Activated CD8-positive, alpha-beta T cell treated with anti-CD3 and anti-CD28 coated beads for 36 hours (primary cell): ENCODE measurements at regions of chr6 and their contacts with region 1.

Region 1: DNA sequence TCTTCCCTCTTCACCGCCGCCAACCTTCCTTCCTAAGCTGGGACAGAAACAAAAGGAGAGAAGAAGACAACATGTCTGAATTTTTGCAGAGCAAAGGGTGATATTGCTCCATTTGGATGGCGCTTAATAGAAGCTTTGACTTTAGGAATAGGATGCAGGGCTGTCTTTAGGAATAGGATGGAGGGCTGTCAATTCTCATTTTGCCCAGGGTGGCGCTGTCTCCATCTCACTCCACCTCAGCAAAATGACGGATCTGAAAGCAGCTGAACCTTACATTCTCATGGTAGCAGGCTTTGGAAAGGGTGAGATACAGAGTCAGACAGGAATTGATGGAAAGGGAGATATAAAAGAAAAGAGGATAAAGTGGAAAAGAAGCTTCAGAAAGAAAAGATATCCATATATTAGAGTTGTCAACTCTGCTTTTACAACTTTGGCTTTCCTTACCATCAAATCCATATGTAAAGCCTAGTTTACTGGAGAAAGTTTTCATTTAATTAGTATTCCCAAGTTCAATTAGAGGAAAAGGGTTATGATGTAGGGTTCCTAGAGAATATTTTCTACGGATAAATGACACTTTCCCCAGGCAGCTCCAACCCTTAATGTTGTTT is 2.4 kb downstream of the MTCL3 start:
- DNase-seq: peak; percentile 74
- ATAC-seq: peak; percentile 45
- H3K4me3 Mint-ChIP-seq: peak overlapping the region; percentile 86
- H3K27ac Mint-ChIP-seq: peak overlapping the region; percentile 1
- H3K4me1 Mint-ChIP-seq: peaks cover 26% of the 10 kb centered on the region
- H3K27me3 Mint-ChIP-seq: peaks cover 36% of the 10 kb centered on the region
- CTCF ChIP-seq: peak; percentile 85

Region 2: DNA sequence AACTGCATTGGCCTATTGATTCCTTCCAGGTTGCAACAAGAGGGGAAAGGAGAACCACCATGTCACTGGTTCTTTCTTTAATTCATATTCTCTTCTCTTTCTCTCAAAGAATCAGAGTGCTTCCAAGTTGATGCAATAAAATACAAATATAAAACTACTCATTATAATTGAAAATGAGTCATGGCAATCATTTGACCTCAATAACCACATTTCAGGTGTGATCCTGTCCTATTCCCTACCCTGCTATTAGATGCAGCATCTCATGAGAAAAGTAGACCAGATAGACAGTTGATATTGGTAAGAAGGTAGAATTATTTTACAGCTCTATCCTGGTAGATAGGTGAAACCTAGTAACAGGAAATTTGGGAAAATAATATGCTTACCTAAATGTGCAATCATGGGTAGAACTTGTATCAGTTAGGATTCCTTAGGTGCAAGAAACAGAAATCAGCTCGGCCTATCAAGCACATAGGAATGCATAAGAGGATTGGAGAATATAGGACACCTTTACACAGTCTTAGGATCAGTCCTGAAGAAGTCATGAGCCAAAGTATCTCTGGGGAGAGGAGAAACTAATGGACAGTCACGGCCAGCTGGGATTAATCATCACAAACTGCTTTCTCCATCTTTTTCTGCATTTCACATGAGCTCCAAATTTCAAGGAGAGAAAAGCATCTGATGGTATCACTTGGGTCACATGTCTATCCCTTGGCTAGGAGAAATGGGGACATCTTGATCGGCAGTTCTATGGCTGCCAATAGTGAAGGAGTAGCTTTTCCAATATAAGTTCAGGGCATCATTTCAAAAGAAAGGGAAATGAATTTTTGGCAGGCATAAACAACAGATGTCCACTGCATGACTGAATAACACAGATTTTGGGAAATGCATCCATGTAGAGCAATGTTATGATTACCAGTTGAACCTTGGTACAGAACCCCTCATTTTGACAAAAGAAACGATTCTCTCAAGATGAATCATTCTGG is 269.4 kb before region 1 on chr6:
- CTCF ChIA-PET with region 1: no interaction called
- POLR2A ChIA-PET with region 1: no interaction called
- intact Hi-C with region 1: no loop called
- DNase-seq: no peak
- ATAC-seq: no peak
- H3K4me3 Mint-ChIP-seq: no peak overlapping the region
- H3K27ac Mint-ChIP-seq: no peak overlapping the region
- H3K4me1 Mint-ChIP-seq: no peaks in the 10 kb centered on the region
- H3K27me3 Mint-ChIP-seq: peaks cover 4% of the 10 kb centered on the region
- CTCF ChIP-seq: no peak

Region 3: DNA sequence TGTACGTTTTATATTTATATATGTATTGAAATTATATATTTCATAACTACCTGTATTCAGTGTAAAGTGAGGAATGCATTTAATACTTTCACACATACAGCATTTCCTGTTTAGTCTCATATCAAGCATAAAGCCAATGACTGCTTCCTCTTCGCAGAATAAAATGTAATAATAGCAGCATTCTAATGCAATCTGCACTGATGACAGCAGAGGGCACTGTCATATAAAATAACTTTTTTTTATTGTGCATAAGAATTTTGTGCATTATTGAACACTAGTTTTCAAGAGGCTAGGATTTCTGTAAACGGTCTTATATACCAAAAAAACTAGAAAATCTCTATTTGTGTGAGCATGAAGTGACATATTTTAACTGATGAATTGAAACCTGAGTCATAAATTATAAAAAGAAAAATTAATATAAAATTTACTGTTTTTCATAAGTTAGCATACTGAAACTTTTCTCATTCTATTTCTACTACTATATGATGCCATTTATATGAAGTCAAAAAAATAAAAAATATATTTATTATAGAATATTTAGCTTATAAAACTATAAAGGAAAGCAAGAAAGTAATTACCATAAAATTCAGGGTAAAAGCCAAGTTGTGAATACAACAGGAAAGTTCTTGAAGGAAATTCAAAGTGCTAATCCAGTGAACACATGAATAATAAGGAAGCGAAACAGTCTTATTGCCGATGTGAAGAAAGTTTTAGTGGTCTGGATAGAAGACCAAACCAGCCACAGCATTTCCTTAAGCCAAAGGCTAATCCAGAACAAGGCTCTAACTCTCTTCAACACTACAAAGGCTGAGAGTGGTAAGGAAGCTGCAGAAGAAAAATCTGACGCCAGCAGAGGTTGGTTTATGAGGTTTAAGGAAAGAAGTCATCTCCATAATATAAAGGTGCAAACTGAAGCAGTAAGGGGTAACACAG is 213.8 kb before region 1 on chr6:
- CTCF ChIA-PET with region 1: interaction called, 22 read pairs
- POLR2A ChIA-PET with region 1: no interaction called
- intact Hi-C with region 1: no loop called
- DNase-seq: peak; percentile 69
- ATAC-seq: peak; percentile 86
- H3K4me3 Mint-ChIP-seq: no peak overlapping the region
- H3K27ac Mint-ChIP-seq: no peak overlapping the region
- H3K4me1 Mint-ChIP-seq: peaks cover 29% of the 10 kb centered on the region
- H3K27me3 Mint-ChIP-seq: no peaks in the 10 kb centered on the region
- CTCF ChIP-seq: peak; percentile 81

Region 4: DNA sequence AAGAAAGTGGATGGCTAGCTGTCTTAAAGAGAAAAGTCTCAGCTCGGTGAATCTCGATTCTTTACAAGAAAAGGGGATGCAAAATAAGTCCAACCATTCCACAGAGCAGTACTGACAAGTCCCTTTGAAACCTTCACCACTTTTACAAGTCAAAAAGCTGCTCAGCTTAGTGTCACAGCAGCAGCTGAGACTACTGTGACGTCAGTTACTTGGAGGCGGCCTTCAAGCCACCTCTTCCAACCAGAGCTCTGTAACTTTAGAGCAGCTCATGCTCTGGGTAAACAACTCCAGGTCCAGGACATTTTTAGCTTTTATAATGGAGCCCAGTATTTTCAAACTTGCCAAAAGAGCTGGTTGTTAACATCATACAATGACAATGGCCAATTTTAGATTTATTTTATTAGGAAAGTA is 57.5 kb before region 1 on chr6 and contains the start of gene KIAA0408:
- CTCF ChIA-PET with region 1: interaction called, 16 read pairs
- POLR2A ChIA-PET with region 1: no interaction called
- intact Hi-C with region 1: no loop called
- DNase-seq: no peak
- ATAC-seq: no peak
- H3K4me3 Mint-ChIP-seq: no peak within 1 kb of the TSS
- H3K27ac Mint-ChIP-seq: no peak within 1 kb of the TSS
- H3K4me1 Mint-ChIP-seq: no peaks in the 10 kb centered on the region
- H3K27me3 Mint-ChIP-seq: peaks cover 2% of the 10 kb centered on the region
- CTCF ChIP-seq: no peak
- total RNA-seq, gene KIAA0408: 1.8 to 2.6 TPM

Region 5: GRCh38 chr6:127484212-127484858 is 32.4 kb before region 1 on chr6:
- CTCF ChIA-PET with region 1: interaction called, 86 read pairs
- POLR2A ChIA-PET with region 1: interaction called, 24 read pairs
- intact Hi-C with region 1: loop called (anchors 2 kb)
- DNase-seq: peak; percentile 10
- ATAC-seq: peak; percentile 91
- H3K4me3 Mint-ChIP-seq: peak overlapping the region; percentile 40
- H3K27ac Mint-ChIP-seq: peak overlapping the region; percentile 83
- H3K4me1 Mint-ChIP-seq: peaks cover 31% of the 10 kb centered on the region
- H3K27me3 Mint-ChIP-seq: peaks cover 4% of the 10 kb centered on the region
- CTCF ChIP-seq: no peak

Region 6: GRCh38 chr6:127503022-127503421 is 13.7 kb before region 1 on chr6:
- CTCF ChIA-PET with region 1: interaction called, 37 read pairs
- POLR2A ChIA-PET with region 1: interaction called, 3 read pairs
- intact Hi-C with region 1: no loop called
- DNase-seq: no peak
- ATAC-seq: no peak
- H3K4me3 Mint-ChIP-seq: no peak overlapping the region
- H3K27ac Mint-ChIP-seq: no peak overlapping the region
- H3K4me1 Mint-ChIP-seq: no peaks in the 10 kb centered on the region
- H3K27me3 Mint-ChIP-seq: peaks cover 7% of the 10 kb centered on the region
- CTCF ChIP-seq: no peak

Region 7: DNA sequence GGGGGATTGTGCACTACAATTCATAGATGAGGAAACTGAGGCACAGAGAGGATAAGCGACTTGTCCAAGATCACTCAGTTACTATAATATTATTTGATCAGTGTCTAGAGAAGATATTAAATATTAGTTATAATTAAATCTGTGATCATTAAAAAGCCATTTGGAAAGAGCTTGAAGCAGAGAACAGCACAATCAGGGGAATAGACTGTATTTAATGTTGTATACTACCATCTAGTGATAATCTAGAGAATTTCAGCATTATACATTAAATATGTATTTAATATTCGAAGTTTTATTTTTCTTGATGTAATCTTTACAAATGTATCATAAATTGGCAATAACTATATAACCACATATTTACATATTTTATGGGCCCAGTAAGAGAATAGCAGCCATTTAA is 22.5 kb after region 1 on chr6:
- CTCF ChIA-PET with region 1: interaction called, 41 read pairs
- POLR2A ChIA-PET with region 1: interaction called, 3 read pairs
- intact Hi-C with region 1: no loop called
- DNase-seq: no peak
- ATAC-seq: peak; percentile 76
- H3K4me3 Mint-ChIP-seq: no peak overlapping the region
- H3K27ac Mint-ChIP-seq: no peak overlapping the region
- H3K4me1 Mint-ChIP-seq: no peaks in the 10 kb centered on the region
- H3K27me3 Mint-ChIP-seq: peaks cover 12% of the 10 kb centered on the region
- CTCF ChIP-seq: peak; percentile 61